ENCODE measurements at regions of chr3 and their contacts with region 1.

Region 1: DNA sequence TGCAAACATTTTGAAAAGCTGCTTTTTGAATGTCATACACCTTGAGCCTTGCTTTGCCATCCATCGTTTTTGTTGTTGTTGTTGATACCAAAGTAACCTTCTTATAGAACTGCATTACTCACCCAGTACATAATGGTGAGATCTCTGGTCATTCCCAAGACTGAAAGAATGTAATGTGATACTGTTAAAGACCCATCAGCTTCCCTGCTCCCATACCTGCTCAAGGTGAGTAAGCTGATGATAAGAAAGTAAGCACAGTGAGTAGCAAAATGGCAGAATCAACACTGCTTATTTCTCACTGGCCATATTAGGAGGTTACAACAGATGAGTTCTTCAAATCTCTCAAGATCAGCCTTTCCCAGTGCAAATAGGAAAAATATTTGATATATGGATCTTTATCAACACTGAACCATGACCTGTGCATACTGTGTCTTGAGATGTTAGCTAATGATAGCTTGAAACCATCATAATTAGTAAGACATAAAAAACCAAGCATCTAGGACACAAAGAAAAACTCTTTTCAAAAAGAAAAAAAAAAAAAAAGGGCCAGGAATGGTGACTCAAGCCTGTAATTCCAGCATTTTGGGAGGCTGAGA is 89.7 kb downstream of the CADPS start:
- DNase-seq: no peak
- H3K4me3 ChIP-seq: no peak overlapping the region
- H3K27ac ChIP-seq: no peak overlapping the region
- H3K4me1 ChIP-seq: peaks cover 11% of the 10 kb centered on the region
- CTCF ChIP-seq: no peak

Region 2: GRCh38 chr3:62798000-62798399 is 12.5 kb after region 1 on chr3:
- CTCF ChIA-PET with region 1: no interaction called
- POLR2A ChIA-PET with region 1: interaction called, 961 read pairs
- intact Hi-C with region 1: no loop called
- DNase-seq: no peak
- H3K4me3 ChIP-seq: no peak overlapping the region
- H3K27ac ChIP-seq: peak overlapping the region; percentile 88
- H3K4me1 ChIP-seq: peaks cover 99% of the 10 kb centered on the region
- CTCF ChIP-seq: no peak